Activated T-helper 1 cell treated with anti-CD3 and anti-CD28 coated beads, Interleukin-12 subunit alpha, Interleukin-12 subunit beta, Interleukin-2, Interleukin-4 antibody, amounts not matched to agents 30 ng/mL and 10 ng/mL and 1 ng/mL, durations not matched to agents 14 hours and 24 hours and 36 hours (primary cell): ENCODE measurements at regions of chr5 and their contacts with region 1.

Region 1: DNA sequence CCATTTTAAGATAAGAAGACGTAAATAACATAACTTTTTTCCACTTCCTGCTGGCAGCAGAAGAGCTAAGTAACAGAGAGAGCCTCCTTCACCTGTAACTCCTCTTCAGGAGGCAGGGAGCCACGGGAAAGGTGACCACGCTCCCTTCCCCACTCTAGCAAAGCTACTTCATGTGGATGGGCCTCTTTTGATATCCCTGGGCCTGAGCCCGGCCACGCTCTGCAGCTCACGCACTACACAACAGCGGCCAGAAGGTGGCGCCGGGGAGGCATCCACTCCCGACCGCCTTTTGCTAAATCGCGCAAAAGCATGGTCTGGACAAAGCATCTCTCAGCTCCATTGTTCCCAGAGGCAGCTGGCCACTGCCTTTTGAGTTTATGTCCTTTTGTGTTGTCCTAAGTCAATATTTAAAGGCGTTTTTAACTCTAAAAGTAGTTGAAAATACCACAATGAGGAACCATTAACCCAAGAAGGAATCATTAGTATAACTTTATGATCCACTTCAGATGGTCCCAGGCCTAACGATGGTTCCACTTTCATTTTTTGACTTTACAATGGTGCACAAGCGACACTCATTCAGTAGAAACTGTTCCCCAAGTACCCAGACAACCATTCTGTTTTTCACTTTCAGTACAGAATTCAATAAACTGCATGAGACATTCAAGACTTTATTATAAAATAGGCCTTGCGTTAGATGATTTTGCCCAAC is 23.6 kb downstream of the CMBL start:
- DNase-seq: peak; percentile 62
- H3K4me3 Mint-ChIP-seq: no peak overlapping the region
- H3K27ac Mint-ChIP-seq: no peak overlapping the region
- H3K4me1 Mint-ChIP-seq: no peaks in the 10 kb centered on the region
- H3K27me3 Mint-ChIP-seq: peaks cover 6% of the 10 kb centered on the region

Region 2: DNA sequence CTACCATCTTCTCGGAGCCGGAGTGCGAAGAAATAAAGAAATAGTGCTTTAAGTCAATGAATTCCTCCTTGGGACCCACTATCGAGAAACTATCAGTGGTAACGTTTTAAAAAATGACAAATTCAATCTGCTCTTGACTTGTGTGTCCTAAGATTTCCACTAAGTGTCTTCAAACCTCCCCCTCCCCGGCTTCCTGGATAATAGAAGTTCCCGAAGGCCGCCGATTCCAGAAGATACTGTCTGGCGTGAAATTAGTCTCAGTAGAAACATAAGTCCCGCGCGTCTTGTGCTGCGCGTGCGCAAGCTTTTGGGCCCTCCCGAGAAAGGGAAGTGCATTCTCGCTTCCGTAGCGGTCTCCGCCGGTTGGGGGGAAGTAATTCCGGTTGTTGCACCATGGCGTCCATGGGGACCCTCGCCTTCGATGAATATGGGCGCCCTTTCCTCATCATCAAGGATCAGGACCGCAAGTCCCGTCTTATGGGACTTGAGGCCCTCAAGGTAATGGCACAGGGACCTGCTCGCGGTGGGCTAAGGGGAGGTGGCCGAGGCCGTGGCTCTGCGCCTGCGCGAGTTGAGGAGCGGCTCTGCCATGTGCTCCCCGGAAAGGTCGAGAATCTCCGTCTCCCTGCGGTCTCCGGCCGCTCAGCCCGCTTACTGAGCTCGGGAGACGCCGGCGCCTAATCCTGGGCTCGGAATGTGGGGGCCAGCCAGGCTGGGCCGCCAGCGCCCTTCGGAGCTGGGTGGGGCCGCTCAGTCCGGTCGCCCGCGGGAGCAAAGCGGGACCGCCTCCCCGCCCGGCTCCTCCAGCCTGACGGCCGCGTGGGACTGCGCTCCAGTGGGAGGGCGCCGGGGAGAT is 33.9 kb before region 1 on chr5 and contains the start of gene CCT5:
- intact Hi-C with region 1: loop called (anchors 1 kb)
- DNase-seq: peak; percentile 89
- H3K4me3 Mint-ChIP-seq: peak within 1 kb of the TSS; percentile 91
- H3K27ac Mint-ChIP-seq: peak within 1 kb of the TSS; percentile 100
- H3K4me1 Mint-ChIP-seq: peaks cover 53% of the 10 kb centered on the region
- H3K27me3 Mint-ChIP-seq: no peaks in the 10 kb centered on the region
- total RNA-seq, gene CCT5: 511 and 512 TPM in 2 replicates

Region 3: GRCh38 chr5:10364186-10364683 is 80.2 kb after region 1 on chr5:
- intact Hi-C with region 1: loop called (anchors 1 kb)
- DNase-seq: no peak
- H3K4me3 Mint-ChIP-seq: no peak overlapping the region
- H3K27ac Mint-ChIP-seq: no peak overlapping the region
- H3K4me1 Mint-ChIP-seq: peaks cover 39% of the 10 kb centered on the region
- H3K27me3 Mint-ChIP-seq: no peaks in the 10 kb centered on the region

Region 4: GRCh38 chr5:10424124-10424731 is 140.1 kb after region 1 on chr5:
- intact Hi-C with region 1: loop called (anchors 1 kb)
- DNase-seq: no peak
- H3K4me3 Mint-ChIP-seq: no peak overlapping the region
- H3K27ac Mint-ChIP-seq: no peak overlapping the region
- H3K4me1 Mint-ChIP-seq: peaks cover 20% of the 10 kb centered on the region
- H3K27me3 Mint-ChIP-seq: no peaks in the 10 kb centered on the region

Region 5: DNA sequence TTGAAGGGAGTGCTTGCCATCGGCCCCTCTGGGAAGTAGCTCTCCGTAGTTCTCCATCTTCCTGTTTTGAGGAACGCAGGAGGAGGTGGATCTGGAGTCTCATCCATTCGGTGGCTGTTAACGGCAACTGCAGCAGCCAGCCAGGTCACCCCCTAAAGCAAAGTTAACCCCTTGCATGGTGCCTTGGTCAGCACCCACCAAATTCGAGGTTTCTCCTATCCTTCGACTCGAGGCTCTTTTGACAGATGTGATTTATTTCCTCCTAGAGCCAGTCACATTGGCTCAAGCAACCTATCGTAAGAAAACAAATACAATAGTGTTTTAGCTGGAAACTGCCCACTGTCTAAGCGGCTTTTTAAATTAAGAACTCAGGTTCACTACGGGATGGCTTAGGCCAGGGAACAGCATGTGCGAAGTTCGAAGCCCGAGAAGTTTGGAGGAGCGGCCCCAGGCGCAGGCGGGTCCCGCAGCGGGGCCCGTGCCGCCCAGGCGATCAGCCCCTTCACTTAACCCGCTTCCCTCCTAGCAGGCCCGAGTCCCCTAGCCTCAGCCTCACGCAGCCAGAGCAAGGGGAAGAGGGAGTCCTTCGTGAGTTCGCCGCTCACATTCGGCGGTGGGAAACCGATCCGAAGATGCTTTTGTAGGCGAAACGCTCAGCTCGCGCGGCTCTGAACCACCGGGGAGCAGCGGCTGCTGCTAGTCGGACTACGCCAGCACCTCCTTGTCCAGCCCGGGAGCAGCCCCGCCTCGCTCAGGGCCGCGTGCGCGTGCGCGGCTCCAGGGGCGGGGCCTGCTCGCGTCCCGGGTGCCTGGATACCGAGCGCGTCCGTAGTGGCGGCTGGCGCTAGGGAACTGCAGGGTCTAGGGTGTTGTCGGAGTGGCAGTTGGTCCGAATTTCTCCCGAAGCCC is 157.3 kb after region 1 on chr5 and contains the start of gene ROPN1L:
- intact Hi-C with region 1: loop called (anchors 1 kb)
- DNase-seq: peak; percentile 80
- H3K4me3 Mint-ChIP-seq: peak within 1 kb of the TSS; percentile 85
- H3K27ac Mint-ChIP-seq: no peak within 1 kb of the TSS
- H3K4me1 Mint-ChIP-seq: peaks cover 35% of the 10 kb centered on the region
- H3K27me3 Mint-ChIP-seq: peaks cover 2% of the 10 kb centered on the region
- total RNA-seq, gene ROPN1L: 0.16 and 0.20 TPM in 2 replicates

Region 6: DNA sequence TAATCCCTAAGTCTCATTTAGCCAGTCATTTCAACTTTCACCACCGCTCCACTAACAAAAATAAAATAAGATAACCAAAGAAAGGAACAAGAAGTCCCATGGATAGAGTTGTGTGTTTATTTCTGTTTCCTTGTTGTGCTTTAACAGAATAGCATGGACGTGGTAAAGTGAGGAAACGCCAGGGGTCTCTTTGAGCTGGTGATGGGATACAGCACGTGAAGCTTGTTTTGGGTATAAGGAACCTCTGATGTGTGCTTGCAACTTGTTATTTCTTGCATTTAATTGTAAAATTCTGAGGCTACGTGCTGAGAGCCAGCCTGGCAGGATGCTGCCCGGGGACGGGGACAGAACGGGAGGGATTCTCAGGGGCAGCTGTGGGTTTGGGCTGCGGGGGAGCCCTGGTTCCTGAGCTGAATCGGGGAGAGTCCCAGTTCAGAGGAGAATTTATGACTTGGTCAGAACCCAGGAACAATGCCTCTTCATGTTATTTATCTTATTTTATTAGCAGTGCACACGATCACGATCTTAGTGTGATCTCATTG is 343.1 kb after region 1 on chr5:
- intact Hi-C with region 1: loop called (anchors 1 kb)
- DNase-seq: no peak
- H3K4me3 Mint-ChIP-seq: peak overlapping the region; percentile 77
- H3K27ac Mint-ChIP-seq: peak overlapping the region; percentile 90
- H3K4me1 Mint-ChIP-seq: peaks cover 50% of the 10 kb centered on the region
- H3K27me3 Mint-ChIP-seq: peaks cover 3% of the 10 kb centered on the region